CD4-positive, alpha-beta T cell (primary cell): ENCODE measurements at regions of chr16 and their contacts with region 1.

Region 1: DNA sequence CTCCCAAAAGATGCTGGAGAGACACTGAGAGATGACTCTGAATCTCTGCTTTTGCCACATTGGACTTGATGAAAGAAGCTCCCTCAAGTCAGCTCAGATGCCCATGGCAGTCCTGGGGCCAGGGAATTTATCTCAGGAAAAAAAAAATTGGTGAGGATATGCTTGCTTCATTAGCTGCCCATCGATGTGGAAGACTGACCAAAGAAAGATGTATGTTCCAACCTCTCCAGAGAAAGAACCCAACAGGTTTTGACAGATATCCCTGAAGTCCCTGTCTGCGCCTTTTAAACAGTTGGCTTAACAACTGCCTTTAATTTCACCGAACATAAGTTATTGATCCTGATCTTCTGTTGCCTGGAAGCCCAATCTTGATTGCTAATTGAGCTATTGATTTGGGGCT is 137.4 kb downstream of the TMEM114 start:
- DNase-seq: no peak
- ATAC-seq: no peak
- H3K4me3 ChIP-seq: no peak overlapping the region
- H3K4me3 Mint-ChIP-seq: no peak overlapping the region
- H3K27ac ChIP-seq: no peak overlapping the region
- H3K27ac Mint-ChIP-seq: no peak overlapping the region
- H3K4me1 ChIP-seq: no peaks in the 10 kb centered on the region
- H3K4me1 Mint-ChIP-seq: no peaks in the 10 kb centered on the region
- H3K27me3 ChIP-seq: no peaks in the 10 kb centered on the region
- H3K27me3 Mint-ChIP-seq: peaks cover 6% of the 10 kb centered on the region
- CTCF ChIP-seq: no peak

Region 2: DNA sequence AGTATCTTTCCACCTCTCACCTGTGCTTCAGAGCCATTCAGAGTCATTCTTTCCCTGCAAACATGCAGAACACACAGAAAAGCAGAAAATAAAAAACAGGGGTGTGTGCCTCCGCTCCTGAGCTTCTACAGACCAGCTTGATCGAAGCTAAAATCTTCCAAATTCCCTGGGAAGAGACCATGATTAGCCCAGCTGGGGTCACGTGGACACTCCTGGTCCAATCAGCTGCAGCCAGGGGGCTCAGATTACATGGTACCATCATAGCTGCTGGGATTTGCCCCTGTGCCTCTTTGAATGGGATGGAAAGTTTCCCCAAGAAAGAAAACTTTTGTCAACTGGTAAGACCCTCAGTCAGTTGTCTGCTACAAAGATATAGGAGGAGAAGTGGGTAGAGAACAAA is 22.5 kb before region 1 on chr16:
- CTCF ChIA-PET with region 1: no interaction called
- POLR2A ChIA-PET with region 1: no interaction called
- intact Hi-C with region 1: no loop called
- DNase-seq: no peak
- ATAC-seq: no peak
- H3K4me3 ChIP-seq: no peak overlapping the region
- H3K4me3 Mint-ChIP-seq: no peak overlapping the region
- H3K27ac ChIP-seq: no peak overlapping the region
- H3K27ac Mint-ChIP-seq: no peak overlapping the region
- H3K4me1 ChIP-seq: no peaks in the 10 kb centered on the region
- H3K4me1 Mint-ChIP-seq: no peaks in the 10 kb centered on the region
- H3K27me3 ChIP-seq: no peaks in the 10 kb centered on the region
- H3K27me3 Mint-ChIP-seq: peaks cover 7% of the 10 kb centered on the region
- CTCF ChIP-seq: no peak

Region 3: DNA sequence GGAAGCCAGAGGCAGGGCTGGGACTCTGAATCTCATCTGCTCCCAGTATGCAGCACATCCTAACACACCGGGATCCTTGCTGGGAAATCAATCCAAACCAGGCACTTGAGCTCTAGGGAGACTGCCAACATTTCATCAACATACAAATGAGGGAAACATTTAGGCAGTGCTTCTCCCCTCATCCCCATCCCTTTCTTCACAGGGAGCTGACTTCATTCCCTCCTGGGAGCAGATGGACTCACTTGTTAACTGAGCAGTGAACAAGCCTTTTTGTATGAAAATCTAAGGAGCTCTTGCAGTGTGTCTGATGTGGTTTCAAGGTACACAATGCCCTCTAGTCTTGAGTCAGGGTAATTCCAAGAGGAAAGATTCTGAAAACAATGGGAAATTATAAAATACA is 41.0 kb after region 1 on chr16:
- CTCF ChIA-PET with region 1: no interaction called
- POLR2A ChIA-PET with region 1: no interaction called
- intact Hi-C with region 1: no loop called
- DNase-seq: no peak
- ATAC-seq: no peak
- H3K4me3 ChIP-seq: no peak overlapping the region
- H3K4me3 Mint-ChIP-seq: no peak overlapping the region
- H3K27ac ChIP-seq: no peak overlapping the region
- H3K27ac Mint-ChIP-seq: no peak overlapping the region
- H3K4me1 ChIP-seq: no peaks in the 10 kb centered on the region
- H3K4me1 Mint-ChIP-seq: no peaks in the 10 kb centered on the region
- H3K27me3 ChIP-seq: no peaks in the 10 kb centered on the region
- H3K27me3 Mint-ChIP-seq: peaks cover 6% of the 10 kb centered on the region
- CTCF ChIP-seq: no peak

Region 4: DNA sequence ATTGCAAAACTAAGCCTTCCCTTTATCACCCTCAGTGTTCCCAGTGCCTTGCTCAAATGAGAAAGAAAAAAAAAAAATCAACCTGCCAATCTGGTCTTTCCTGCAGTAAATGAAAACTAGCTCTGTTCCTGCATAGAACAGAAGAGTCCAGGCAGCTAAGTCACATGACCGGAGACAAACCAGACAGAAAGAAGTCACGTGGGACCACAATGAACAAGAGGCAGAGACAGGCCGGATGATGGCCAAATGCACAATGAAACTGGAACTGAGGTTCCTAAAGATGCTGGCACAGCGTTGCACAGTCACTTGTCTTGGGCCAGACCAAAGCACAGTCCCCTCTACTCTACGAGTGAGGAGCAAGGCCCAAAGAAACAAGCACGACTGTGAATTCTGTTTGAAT is 1556.7 kb after region 1 on chr16:
- CTCF ChIA-PET with region 1: no interaction called
- POLR2A ChIA-PET with region 1: no interaction called
- intact Hi-C with region 1: loop called in 1 of 2 experiments (anchors 5 kb)
- DNase-seq: no peak
- ATAC-seq: no peak
- H3K4me3 ChIP-seq: no peak overlapping the region
- H3K4me3 Mint-ChIP-seq: no peak overlapping the region
- H3K27ac ChIP-seq: no peak overlapping the region
- H3K27ac Mint-ChIP-seq: no peak overlapping the region
- H3K4me1 ChIP-seq: no peaks in the 10 kb centered on the region
- H3K4me1 Mint-ChIP-seq: no peaks in the 10 kb centered on the region
- H3K27me3 ChIP-seq: no peaks in the 10 kb centered on the region
- H3K27me3 Mint-ChIP-seq: peaks cover 20% of the 10 kb centered on the region
- CTCF ChIP-seq: no peak